ENCODE measurements at regions of chr2 and their contacts with region 1.

Region 1: GRCh38 chr2:147297820-147298219 is 547.0 kb upstream of the ACVR2A start:
- DNase-seq: peak; percentile 58
- H3K4me3 Mint-ChIP-seq: peak overlapping the region; percentile 39
- H3K27ac Mint-ChIP-seq: peak overlapping the region; percentile 89
- H3K4me1 Mint-ChIP-seq: peaks cover 73% of the 10 kb centered on the region
- H3K27me3 Mint-ChIP-seq: no peaks in the 10 kb centered on the region

Region 2: GRCh38 chr2:147099837-147100720 is 197.7 kb before region 1 on chr2:
- CTCF ChIA-PET with region 1: no interaction called
- POLR2A ChIA-PET with region 1: no interaction called
- intact Hi-C with region 1: loop called (anchors 1 kb)
- DNase-seq: no peak
- H3K4me3 Mint-ChIP-seq: no peak overlapping the region
- H3K27ac Mint-ChIP-seq: no peak overlapping the region
- H3K4me1 Mint-ChIP-seq: peaks cover 11% of the 10 kb centered on the region
- H3K27me3 Mint-ChIP-seq: no peaks in the 10 kb centered on the region

Region 3: DNA sequence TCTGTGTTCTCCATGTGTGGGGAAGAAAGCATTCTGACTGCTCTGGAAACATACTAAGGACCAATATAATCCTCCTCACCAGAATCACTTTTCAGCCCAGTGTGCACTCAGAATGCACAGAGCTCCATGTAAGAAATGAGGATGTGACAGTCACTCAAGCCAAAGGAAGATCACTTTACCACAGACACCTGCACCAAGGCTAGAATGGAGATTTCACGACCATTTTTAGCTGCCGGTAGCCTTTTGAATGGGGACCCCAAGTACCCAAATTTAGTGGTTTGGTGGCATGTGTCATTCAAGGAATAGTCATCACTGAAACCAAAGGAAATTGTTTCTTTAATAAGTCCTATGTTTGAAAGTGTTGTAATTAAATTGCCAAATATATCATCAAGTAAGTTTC is 66.2 kb before region 1 on chr2:
- CTCF ChIA-PET with region 1: no interaction called
- POLR2A ChIA-PET with region 1: no interaction called
- intact Hi-C with region 1: loop called (anchors 1 kb)
- DNase-seq: peak; percentile 14
- H3K4me3 Mint-ChIP-seq: no peak overlapping the region
- H3K27ac Mint-ChIP-seq: peak overlapping the region; percentile 1
- H3K4me1 Mint-ChIP-seq: peaks cover 11% of the 10 kb centered on the region
- H3K27me3 Mint-ChIP-seq: no peaks in the 10 kb centered on the region

Region 4: DNA sequence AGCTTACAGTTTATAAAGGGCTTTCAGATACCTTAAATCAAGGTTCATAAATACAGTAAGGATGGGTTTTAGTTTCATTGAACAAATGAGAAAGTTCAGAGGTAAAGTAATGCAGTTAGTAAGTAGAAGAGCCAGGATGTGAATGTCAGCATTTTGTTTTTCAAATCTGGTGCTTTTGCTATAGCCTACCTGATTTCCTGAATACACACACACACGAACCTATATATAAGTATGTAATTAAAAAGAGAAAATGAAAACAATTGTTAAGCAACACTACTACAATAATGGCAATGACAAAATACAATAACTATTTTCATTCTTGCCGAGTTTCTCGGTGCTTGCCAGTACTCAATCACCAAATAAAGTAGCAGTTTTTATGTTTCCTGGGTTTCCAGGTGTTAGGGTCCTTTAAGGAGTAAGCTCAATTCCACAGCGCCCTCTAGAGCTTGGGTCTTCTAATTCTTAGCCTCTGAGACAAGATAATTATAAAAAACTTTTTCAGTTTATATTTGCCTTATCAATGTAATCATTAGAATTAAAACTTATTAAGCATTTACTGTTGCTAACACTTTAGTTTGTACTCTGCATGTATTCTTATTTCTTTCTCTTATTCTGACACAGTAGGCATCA is 34.1 kb after region 1 on chr2:
- CTCF ChIA-PET with region 1: interaction called, 6 read pairs
- POLR2A ChIA-PET with region 1: interaction called, 4 read pairs
- intact Hi-C with region 1: loop called (anchors 1 kb)
- DNase-seq: peak; percentile 49
- H3K4me3 Mint-ChIP-seq: no peak overlapping the region
- H3K27ac Mint-ChIP-seq: no peak overlapping the region
- H3K4me1 Mint-ChIP-seq: peaks cover 19% of the 10 kb centered on the region
- H3K27me3 Mint-ChIP-seq: no peaks in the 10 kb centered on the region

Region 5: DNA sequence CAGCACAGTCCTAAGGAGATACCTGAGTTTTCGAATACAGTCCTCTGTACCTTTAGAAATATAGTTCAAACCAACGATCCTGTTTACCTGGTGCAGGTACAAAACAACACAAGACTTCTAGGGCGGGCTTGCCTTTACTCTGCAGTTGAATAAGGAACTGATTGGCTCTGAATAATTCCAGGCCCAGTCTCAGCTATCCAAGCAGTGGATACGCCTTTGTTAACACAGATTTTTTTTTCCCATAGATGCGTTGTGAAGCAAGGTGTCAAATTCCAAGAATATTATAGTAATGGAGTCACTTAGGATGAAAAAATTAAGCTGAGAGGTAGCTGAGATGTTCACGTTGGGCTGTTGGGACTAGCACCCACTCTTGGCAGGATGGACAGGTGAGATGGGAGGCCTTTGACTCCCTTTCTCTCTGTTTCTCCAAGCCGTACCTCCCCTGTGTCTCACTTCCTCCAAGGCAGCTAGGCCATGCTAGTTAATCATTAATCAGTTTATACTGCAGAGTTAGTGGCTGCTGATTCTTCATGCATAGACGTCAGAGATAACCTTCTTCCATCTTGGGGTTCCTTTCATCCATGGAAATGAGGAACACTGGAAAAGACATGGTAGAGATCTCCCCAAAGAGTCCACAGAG is 166.2 kb after region 1 on chr2:
- CTCF ChIA-PET with region 1: no interaction called
- POLR2A ChIA-PET with region 1: no interaction called
- intact Hi-C with region 1: no loop called
- DNase-seq: no peak
- H3K4me3 Mint-ChIP-seq: no peak overlapping the region
- H3K27ac Mint-ChIP-seq: no peak overlapping the region
- H3K4me1 Mint-ChIP-seq: no peaks in the 10 kb centered on the region
- H3K27me3 Mint-ChIP-seq: no peaks in the 10 kb centered on the region

Region 6: GRCh38 chr2:147595200-147595599 is 297.4 kb after region 1 on chr2:
- CTCF ChIA-PET with region 1: no interaction called
- POLR2A ChIA-PET with region 1: no interaction called
- intact Hi-C with region 1: no loop called
- DNase-seq: no peak
- H3K4me3 Mint-ChIP-seq: no peak overlapping the region
- H3K27ac Mint-ChIP-seq: no peak overlapping the region
- H3K4me1 Mint-ChIP-seq: no peaks in the 10 kb centered on the region
- H3K27me3 Mint-ChIP-seq: no peaks in the 10 kb centered on the region

Region 7: DNA sequence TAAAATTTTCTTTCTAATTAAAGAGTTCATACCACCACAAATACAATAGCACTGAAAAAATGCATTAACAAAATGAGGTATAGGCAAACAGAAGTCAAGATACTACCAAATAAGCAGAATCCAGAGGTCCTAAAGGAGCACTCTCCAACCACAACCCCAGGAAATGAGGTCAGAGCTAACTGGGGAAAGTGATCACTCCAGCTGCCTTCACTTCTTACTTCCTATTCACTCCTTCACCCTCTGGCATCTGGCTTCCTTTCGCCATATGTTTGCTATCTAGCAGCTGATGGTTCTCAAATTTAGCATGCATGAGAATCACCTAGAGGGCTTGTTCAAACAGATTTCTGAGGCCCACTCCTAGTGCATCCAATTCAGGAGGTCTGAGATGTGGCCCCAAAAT is 334.4 kb after region 1 on chr2:
- CTCF ChIA-PET with region 1: no interaction called
- POLR2A ChIA-PET with region 1: no interaction called
- intact Hi-C with region 1: loop called (anchors 2 kb)
- DNase-seq: no peak
- H3K4me3 Mint-ChIP-seq: no peak overlapping the region
- H3K27ac Mint-ChIP-seq: no peak overlapping the region
- H3K4me1 Mint-ChIP-seq: peaks cover 46% of the 10 kb centered on the region
- H3K27me3 Mint-ChIP-seq: no peaks in the 10 kb centered on the region

Region 8: DNA sequence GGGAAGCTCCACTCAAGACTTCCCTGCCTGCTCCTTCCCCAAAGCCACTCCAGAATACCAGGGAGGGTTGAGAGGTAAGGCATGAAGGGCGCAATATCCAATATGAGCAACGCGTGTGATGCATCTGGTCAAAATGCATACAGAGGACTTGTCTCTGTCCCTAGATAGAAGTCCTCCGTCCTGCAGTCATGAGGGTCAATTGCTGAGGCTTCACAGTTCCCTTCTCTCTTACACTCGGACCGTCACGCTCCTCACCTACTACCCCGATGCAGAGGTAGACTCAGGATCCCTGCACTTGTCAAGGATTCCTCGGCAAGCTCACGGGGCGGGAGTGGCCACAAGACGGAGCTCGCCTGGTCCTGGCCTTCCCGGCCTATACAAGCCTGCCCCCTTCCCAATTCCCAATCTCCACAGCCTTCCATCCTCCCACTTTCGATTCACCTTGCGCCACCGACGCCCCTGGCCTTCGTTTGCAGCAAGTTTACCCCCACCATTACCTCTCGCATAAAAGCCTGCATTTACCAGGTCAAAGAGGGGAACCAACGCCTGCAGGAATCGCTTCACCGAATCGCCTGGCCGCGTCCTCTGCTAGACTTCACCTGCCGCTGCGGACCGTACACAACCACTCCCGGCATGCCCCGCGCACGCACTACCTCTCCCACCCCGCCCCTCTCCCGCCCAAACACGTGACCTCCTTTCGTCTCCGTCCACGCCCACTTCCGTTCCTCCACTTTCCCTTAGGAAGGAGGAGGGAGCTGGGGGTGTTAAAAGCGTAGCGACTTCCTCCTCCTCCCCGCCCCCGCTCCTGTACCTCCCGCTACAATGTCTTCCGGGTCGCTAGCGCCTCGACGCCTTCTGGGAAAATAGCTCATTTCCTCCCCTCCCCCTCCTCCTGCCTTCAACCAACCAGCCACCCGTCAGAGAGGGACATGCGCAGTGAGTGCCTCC is 722.6 kb after region 1 on chr2 and contains the start of gene ORC4:
- CTCF ChIA-PET with region 1: no interaction called
- POLR2A ChIA-PET with region 1: no interaction called
- intact Hi-C with region 1: loop called (anchors 5 kb)
- DNase-seq: peak; percentile 99
- H3K4me3 Mint-ChIP-seq: peak within 1 kb of the TSS; percentile 100
- H3K27ac Mint-ChIP-seq: peak within 1 kb of the TSS; percentile 97
- H3K4me1 Mint-ChIP-seq: peaks cover 39% of the 10 kb centered on the region
- H3K27me3 Mint-ChIP-seq: no peaks in the 10 kb centered on the region
- total RNA-seq, gene ORC4: 34.1 to 34.9 TPM